Heart right ventricle (tissue), 16 donors: ENCODE measurements at regions of chr2 and their contacts with region 1.

Region 1: DNA sequence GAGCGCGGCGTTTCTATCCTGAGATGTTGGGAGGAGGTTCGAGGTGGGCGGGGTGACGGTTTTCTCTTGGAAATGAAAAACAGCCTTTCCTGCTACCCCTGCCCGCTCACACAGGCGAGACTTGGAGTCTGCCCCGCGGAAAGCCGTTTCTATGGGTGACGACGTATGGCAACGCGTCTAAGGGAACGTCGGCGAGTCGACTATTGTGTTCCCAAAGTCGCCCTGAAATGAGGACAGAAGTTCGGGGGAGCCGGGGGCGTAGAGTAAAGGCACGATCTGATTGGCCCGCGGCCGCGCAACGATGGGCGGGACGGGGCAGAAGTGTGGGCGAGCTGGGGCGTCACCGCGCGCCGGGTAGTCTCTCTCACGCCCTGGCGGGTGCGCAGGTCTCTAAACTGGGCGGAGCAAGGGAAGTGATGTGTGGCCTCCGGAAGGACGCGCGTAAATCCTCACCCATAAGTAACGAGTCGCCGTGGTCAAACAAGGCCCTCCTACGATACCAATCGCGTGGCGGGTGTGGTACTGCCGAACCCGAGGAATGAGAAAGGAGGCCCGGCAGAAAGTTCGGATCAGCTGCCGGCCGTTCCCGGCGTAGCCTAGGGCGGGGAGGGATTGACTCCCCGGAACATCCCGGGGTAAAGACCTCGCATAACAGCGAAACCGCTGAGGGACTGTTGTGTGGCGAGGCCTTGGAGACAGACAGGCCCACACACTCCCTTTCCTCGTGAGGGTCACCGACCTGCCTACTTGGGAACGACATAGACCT is 89.6 kb downstream of the FAM161A start:
- DNase-seq: peak; percentile 97 to 98
- ATAC-seq: peak; percentile 99 to 100 (median 100)
- H3K4me3 ChIP-seq: peak overlapping the region; percentile 40 to 86 (median 64)
- H3K27ac ChIP-seq: peak overlapping the region; percentile 88 to 99 (median 97)
- H3K4me1 ChIP-seq: peaks cover 0 to 14% (median 7%) of the 10 kb centered on the region in 9 donors
- H3K27me3 ChIP-seq: no peaks in the 10 kb centered on the region
- CTCF ChIP-seq: no peak

Region 2: GRCh38 chr2:61470965-61471904 is 293.0 kb before region 1 on chr2 and contains the start of gene USP34:
- intact Hi-C with region 1: loop called in 1 of 10 experiments (anchors 5 kb)
- DNase-seq: peak; percentile 96
- ATAC-seq: peak; percentile 97 to 98 (median 97)
- H3K4me3 ChIP-seq: peak within 1 kb of the TSS; percentile 80 to 99 (median 92)
- H3K27ac ChIP-seq: peak within 1 kb of the TSS; percentile 96 to 100 (median 99)
- H3K4me1 ChIP-seq: peaks cover 0 to 45% (median 26%) of the 10 kb centered on the region in 9 donors
- H3K27me3 ChIP-seq: no peaks in the 10 kb centered on the region
- CTCF ChIP-seq: no peak
- total RNA-seq, gene USP34: 46.1 to 75.7 (median 60.8) TPM

Region 3: GRCh38 chr2:61658841-61659780 is 105.1 kb before region 1 on chr2:
- intact Hi-C with region 1: loop called in 1 of 10 experiments (anchors 5 kb)
- DNase-seq: peak in 1 of 2 donors; percentile 32
- ATAC-seq: peak; percentile 73 to 93 (median 91)
- H3K4me3 ChIP-seq: no peak overlapping the region
- H3K27ac ChIP-seq: peak overlapping the region; percentile 78 to 90 (median 84)
- H3K4me1 ChIP-seq: peaks cover 0 to 31% (median 17%) of the 10 kb centered on the region in 9 donors
- H3K27me3 ChIP-seq: no peaks in the 10 kb centered on the region
- CTCF ChIP-seq: peak; percentile 20 to 67 (median 48)

Region 4: GRCh38 chr2:61670591-61671501 is 93.4 kb before region 1 on chr2:
- intact Hi-C with region 1: loop called in 1 of 10 experiments (anchors 5 kb)
- DNase-seq: peak; percentile 28 to 36
- ATAC-seq: peak; percentile 78 to 92 (median 87)
- H3K4me3 ChIP-seq: peak overlapping the region in 9 of 10 donors; percentile 8 to 31 (median 25)
- H3K27ac ChIP-seq: peak overlapping the region; percentile 70 to 89 (median 80)
- H3K4me1 ChIP-seq: peaks cover 4 to 23% (median 19%) of the 10 kb centered on the region in 9 donors
- H3K27me3 ChIP-seq: no peaks in the 10 kb centered on the region
- CTCF ChIP-seq: no peak

Region 5: GRCh38 chr2:61694312-61695274 is 69.6 kb before region 1 on chr2:
- intact Hi-C with region 1: loop called in 6 of 10 experiments (anchors 1 to 10 kb)
- DNase-seq: peak; percentile 94 to 97
- ATAC-seq: peak; percentile 100
- H3K4me3 ChIP-seq: peak overlapping the region; percentile 49 to 90 (median 78)
- H3K27ac ChIP-seq: peak overlapping the region; percentile 57 to 88 (median 86)
- H3K4me1 ChIP-seq: peaks cover 0 to 15% (median 5%) of the 10 kb centered on the region in 9 donors
- H3K27me3 ChIP-seq: no peaks in the 10 kb centered on the region
- CTCF ChIP-seq: peak; percentile 14 to 74 (median 55)

Region 6: DNA sequence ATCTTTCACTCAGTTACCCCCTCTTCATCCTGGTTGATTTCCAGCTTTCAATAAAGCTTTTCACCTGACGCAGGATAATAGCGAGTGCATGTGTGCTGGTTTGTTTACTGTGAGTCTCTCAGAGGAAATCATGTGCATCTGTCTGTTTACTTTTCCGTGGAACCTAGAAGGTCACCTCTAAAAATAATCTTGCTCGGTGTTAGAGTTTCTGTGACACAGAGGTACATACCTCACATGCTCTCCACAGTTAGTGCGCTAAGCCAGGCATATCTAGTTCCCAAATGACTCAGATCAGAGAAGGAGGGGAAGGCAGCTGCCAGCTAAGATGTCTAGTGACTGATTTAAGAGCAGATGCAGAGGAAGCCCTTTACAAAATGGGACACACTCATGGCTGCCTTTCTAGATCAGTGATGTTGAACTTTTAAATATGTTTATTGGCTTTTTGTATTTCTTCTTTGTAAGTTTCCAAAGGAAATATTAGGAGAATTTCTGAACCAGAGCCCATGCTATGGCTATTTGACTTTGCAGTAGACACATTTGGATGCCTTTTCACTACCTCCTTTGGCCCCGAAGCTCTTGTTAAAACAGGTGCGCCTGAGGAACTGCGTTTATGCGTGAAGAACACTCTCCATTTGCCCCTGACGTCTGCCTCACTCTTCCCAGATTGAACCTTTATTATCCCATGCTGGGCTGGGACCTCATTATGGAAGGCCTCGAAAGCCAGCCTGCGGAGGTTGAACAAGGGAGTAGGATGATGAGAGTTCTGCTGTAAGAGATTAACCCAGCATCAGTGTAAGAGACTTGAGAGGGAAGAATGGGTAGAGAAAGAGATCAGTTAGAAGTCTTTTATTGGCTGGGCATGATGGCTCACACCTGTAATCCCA is 56.0 kb before region 1 on chr2:
- intact Hi-C with region 1: loop called in 1 of 10 experiments (anchors 2 kb)
- DNase-seq: no peak
- ATAC-seq: peak; percentile 16 to 98 (median 91)
- H3K4me3 ChIP-seq: no peak overlapping the region
- H3K27ac ChIP-seq: peak overlapping the region; percentile 47 to 84 (median 74)
- H3K4me1 ChIP-seq: peaks cover 0 to 16% (median 0%) of the 10 kb centered on the region in 9 donors
- H3K27me3 ChIP-seq: no peaks in the 10 kb centered on the region
- CTCF ChIP-seq: no peak

Region 7: DNA sequence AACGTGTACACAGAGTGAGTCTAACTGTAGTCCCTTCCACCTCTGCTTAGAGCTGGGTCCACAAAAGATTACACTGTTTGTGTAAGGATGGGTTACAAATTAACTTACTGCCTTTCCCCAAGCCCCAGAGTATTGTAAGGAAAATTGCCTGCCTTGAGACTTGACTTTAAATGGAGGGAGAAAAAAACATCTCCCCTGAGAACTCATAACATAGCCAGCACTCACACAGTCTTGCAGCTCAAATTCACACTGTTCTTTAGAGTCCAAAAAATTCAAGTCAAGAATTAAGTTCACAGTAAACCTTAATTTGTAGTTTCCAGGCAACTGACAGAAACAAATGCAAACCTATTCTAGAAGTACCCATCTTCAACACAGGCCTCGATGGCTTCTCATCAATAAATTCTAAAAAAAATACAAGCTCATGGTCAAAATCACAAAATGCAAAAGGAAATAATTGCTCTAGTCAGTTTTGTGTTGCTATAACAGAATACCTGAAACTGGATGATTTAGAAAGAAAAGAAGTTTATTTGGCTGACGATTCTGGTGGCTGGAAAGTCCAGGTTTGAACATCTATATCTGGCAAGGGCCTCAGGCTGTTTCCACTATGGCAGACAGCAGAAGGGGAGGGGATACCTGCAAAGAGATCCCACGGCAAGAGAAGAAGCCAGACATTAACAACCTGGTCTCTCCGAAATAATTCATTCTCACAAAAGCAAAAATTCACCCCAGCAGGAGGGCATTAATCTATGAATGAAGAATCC is 776.4 kb after region 1 on chr2:
- intact Hi-C with region 1: no loop called
- DNase-seq: no peak
- ATAC-seq: no peak
- H3K4me3 ChIP-seq: no peak overlapping the region
- H3K27ac ChIP-seq: no peak overlapping the region
- H3K4me1 ChIP-seq: no peaks in the 10 kb centered on the region
- H3K27me3 ChIP-seq: peaks cover 0 to 5% (median 0%) of the 10 kb centered on the region in 7 donors
- CTCF ChIP-seq: no peak